Thyroid gland (tissue), 4 donors: ENCODE measurements at regions of chr17 and their contacts with region 1.

Region 1: GRCh38 chr17:81101614-81102306 is 63.5 kb upstream of the PVALEF start:
- DNase-seq: peak; percentile 77 to 83
- H3K4me3 ChIP-seq: no peak overlapping the region
- H3K27ac ChIP-seq: no peak overlapping the region
- H3K4me1 ChIP-seq: peaks cover 6 to 13% of the 10 kb centered on the region in 2 donors
- H3K27me3 ChIP-seq: no peaks in the 10 kb centered on the region
- CTCF ChIP-seq: peak; percentile 96 to 100 (median 100)
- POLR2A ChIP-seq: no peak

Region 2: GRCh38 chr17:80987941-80988461 is 113.8 kb before region 1 on chr17:
- intact Hi-C with region 1: loop called (anchors 2 kb)
- DNase-seq: no peak
- H3K4me3 ChIP-seq: no peak overlapping the region
- H3K27ac ChIP-seq: no peak overlapping the region
- H3K4me1 ChIP-seq: peaks cover 0 to 12% of the 10 kb centered on the region in 2 donors
- H3K27me3 ChIP-seq: no peaks in the 10 kb centered on the region
- CTCF ChIP-seq: no peak
- POLR2A ChIP-seq: no peak

Region 3: DNA sequence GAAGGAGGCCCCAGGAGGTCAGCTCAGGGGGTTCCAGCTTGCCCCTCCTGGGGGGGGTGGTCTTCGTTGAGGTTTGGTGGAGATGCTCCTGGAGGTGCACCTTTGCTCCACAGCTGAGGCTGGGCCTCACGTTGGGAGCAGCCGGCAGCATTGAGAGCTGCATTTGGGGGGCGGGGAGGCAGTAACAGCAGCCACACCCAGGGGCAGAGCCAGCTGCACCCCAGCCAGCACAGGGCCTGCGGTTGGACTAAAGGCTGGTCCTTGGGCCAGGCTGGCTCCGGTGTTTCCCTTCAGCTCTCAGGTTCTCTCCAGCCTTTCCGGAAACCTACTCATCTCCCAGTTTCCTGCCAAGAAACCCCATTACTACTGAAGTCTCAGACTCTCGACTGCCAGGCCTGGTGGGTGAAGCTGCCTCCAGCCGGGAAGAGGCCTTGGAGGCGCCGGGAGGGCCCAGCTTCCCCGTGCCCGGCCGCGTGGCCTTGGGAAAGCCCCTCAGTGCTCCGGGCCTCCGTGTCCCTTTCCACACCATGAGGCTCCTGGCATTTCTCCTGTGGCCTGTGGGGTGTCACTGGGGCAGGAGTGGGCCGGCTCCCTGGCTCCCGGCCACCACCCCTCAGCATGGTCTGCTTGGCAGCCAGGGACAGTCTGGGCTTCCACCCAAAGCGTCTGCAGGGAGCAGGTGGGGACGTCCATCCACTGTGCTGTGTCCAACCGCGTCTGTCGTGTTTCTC is 80.8 kb before region 1 on chr17:
- intact Hi-C with region 1: loop called (anchors 5 kb)
- DNase-seq: peak; percentile 93 to 95
- H3K4me3 ChIP-seq: no peak overlapping the region
- H3K27ac ChIP-seq: peak overlapping the region; percentile 73 to 84 (median 78)
- H3K4me1 ChIP-seq: peaks cover 41 to 52% of the 10 kb centered on the region in 2 donors
- H3K27me3 ChIP-seq: no peaks in the 10 kb centered on the region
- CTCF ChIP-seq: no peak
- POLR2A ChIP-seq: peak in 1 of 2 donors; percentile 25